ENCODE measurements at regions of chr16 and their contacts with region 1.

Region 1: GRCh38 chr16:87757915-87758314 is 7.9 kb downstream of the KLHDC4 start:
- DNase-seq: no peak
- H3K4me3 ChIP-seq: no peak overlapping the region
- H3K27ac ChIP-seq: no peak overlapping the region
- H3K4me1 ChIP-seq: no peaks in the 10 kb centered on the region
- H3K27me3 ChIP-seq: no peaks in the 10 kb centered on the region
- CTCF ChIP-seq: no peak
- EP300 ChIP-seq: no peak
- POLR2A ChIP-seq: no peak

Region 2: DNA sequence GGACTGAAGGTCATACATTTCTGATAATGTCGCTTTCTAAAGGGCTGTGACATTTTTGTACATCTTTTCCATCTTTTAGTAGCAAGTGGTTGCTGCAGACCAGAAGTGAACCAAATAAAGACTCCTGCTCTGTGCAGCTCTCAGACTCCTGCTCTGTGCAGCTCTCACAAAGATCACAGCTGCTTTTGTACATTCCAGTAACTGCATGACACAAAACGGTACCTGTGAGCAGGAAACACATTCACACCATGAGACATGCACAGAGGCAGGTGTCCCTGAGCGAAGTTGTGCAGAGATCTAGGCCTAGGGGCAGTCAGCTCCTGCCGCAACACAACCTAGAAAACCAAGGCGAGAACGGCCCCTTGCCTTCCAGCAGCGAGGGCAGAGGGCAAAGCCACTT is 59.7 kb before region 1 on chr16:
- intact Hi-C with region 1: loop called in 1 of 4 experiments (anchors 10 kb)
- DNase-seq: no peak
- H3K4me3 ChIP-seq: no peak overlapping the region
- H3K27ac ChIP-seq: no peak overlapping the region
- H3K4me1 ChIP-seq: no peaks in the 10 kb centered on the region
- H3K27me3 ChIP-seq: no peaks in the 10 kb centered on the region
- CTCF ChIP-seq: no peak
- EP300 ChIP-seq: no peak
- POLR2A ChIP-seq: no peak

Region 3: GRCh38 chr16:87778830-87779579 is 21.1 kb after region 1 on chr16:
- intact Hi-C with region 1: no loop called
- DNase-seq: peak; percentile 73 to 91 (median 86)
- H3K4me3 ChIP-seq: no peak overlapping the region
- H3K27ac ChIP-seq: no peak overlapping the region
- H3K4me1 ChIP-seq: no peaks in the 10 kb centered on the region
- H3K27me3 ChIP-seq: no peaks in the 10 kb centered on the region
- CTCF ChIP-seq: peak; percentile 89 to 94 (median 92)
- EP300 ChIP-seq: no peak
- POLR2A ChIP-seq: no peak

Measured in ovary (tissue), 10 donors.